Activated CD8-positive, alpha-beta T cell treated with anti-CD3 and anti-CD28 coated beads for 36 hours (primary cell): ENCODE measurements at regions of chr19 and their contacts with region 1.

Region 1: DNA sequence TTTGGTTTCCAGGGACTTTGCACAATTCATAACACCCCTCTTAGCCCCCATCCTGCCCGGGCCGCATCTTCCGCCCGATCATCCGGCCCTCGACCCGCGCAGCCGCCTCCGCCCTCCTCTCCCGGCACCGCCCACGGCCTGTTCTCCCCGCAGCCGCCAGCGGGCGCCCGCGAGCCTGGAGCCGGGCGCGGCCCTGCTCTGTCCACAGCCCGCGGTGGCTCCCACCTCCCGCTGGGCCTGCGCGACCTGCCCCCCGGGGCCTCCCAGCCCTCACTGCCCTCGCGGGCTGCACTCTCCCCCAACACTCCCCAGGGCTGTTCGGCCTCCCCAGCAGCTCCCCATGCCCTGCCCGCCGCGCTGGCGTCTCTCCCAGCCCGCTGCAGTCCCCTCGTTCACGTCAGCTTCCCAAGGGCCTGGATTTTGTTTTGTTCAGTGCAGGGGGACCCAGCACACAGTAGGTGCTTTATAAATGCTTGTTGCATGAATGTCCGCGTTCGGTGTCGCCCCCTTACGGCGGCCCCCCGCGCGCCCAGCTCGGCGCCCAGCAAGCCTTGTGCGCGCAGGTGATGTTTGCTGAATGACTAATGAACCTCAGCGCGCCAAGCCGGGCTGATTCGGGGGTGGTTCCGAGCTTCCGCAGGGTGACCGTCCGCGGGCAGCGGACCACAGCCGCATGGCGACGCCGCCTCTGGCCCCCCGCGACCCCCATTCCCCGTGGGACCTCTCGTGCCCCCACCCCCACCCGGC is 4.6 kb upstream of the APC2 start:
- DNase-seq: peak; percentile 84
- ATAC-seq: peak; percentile 89
- H3K4me3 Mint-ChIP-seq: peak overlapping the region; percentile 60
- H3K27ac Mint-ChIP-seq: no peak overlapping the region
- H3K4me1 Mint-ChIP-seq: peaks cover 29% of the 10 kb centered on the region
- H3K27me3 Mint-ChIP-seq: peaks cover 30% of the 10 kb centered on the region
- CTCF ChIP-seq: peak; percentile 99

Region 2: GRCh38 chr19:1455336-1456120 is 10.2 kb after region 1 on chr19:
- CTCF ChIA-PET with region 1: interaction called, 10 read pairs
- POLR2A ChIA-PET with region 1: interaction called, 5 read pairs
- intact Hi-C with region 1: no loop called
- DNase-seq: peak; percentile 82
- ATAC-seq: peak; percentile 84
- H3K4me3 Mint-ChIP-seq: no peak overlapping the region
- H3K27ac Mint-ChIP-seq: no peak overlapping the region
- H3K4me1 Mint-ChIP-seq: peaks cover 15% of the 10 kb centered on the region
- H3K27me3 Mint-ChIP-seq: peaks cover 52% of the 10 kb centered on the region
- CTCF ChIP-seq: no peak

Region 3: DNA sequence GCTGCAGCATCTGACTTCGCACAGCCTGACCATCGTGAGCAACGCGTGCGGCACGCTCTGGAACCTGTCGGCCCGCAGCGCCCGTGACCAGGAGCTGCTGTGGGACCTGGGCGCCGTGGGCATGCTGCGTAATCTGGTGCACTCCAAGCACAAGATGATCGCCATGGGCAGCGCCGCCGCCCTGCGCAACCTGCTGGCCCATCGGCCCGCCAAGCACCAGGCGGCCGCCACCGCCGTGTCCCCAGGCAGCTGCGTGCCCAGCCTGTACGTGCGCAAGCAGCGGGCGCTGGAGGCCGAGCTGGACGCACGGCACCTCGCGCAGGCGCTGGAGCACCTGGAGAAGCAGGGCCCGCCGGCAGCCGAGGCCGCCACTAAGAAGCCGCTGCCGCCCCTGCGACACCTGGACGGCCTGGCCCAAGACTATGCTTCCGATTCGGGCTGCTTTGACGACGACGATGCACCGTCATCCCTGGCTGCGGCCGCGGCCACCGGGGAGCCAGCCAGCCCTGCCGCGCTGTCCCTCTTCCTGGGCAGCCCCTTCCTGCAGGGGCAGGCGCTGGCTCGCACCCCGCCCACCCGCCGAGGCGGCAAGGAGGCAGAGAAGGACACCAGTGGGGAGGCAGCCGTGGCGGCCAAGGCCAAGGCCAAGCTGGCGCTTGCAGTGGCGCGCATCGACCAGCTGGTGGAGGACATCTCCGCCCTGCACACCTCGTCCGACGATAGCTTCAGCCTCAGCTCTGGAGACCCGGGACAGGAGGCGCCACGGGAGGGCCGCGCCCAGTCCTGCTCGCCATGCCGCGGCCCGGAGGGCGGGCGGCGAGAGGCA is 20.0 kb after region 1 on chr19:
- CTCF ChIA-PET with region 1: interaction called, 13 read pairs
- POLR2A ChIA-PET with region 1: interaction called, 4 read pairs
- intact Hi-C with region 1: no loop called
- DNase-seq: peak; percentile 56
- ATAC-seq: peak; percentile 52
- H3K4me3 Mint-ChIP-seq: no peak overlapping the region
- H3K27ac Mint-ChIP-seq: no peak overlapping the region
- H3K4me1 Mint-ChIP-seq: peaks cover 3% of the 10 kb centered on the region
- H3K27me3 Mint-ChIP-seq: peaks cover 5% of the 10 kb centered on the region
- CTCF ChIP-seq: peak; percentile 50